Activated CD4-positive, alpha-beta T cell treated with anti-CD3 and anti-CD28 coated beads, Interleukin-2, amount 10 ng/mL, durations not matched to agents 24 days and 14 days (primary cell): ENCODE measurements at regions of chr11 and their contacts with region 1.

Region 1: DNA sequence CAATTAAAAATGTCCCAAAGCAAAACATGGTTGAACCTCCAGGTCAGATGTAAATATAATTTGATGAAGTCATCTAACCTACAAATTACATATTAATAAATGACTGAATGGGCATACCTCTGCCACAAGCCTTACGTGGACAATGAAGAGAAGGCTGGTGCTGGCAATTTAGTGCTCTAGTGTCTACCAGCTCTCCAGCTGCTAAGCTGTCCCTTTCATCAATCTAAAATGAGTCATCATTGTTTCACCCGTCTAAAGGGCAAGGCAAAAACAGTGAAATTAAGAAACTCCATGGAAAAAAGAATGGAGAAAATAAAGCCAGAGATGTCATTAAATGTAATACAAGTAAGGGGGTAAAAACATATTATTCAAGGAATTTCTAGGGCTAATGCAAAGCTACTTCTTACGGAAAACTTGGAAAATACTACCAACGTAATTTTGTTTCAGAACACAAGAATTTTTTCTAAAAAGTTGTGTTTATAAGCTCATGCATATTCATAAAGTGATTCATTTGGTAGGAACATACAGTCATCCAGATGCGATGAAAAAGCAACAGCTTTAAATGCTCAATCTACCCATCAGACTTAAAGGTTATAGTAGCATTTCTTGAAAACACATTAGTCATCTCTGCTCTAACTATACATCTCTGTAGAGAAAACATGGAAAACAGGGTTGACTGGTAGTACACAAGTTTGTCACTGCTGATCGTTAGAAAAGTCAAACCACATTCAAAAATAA is 71.5 kb downstream of the SIK3 start:
- DNase-seq: peak; percentile 53
- H3K4me3 Mint-ChIP-seq: peak overlapping the region; percentile 36
- H3K27ac Mint-ChIP-seq: peak overlapping the region; percentile 92
- H3K4me1 Mint-ChIP-seq: peaks cover 54% of the 10 kb centered on the region
- H3K27me3 Mint-ChIP-seq: no peaks in the 10 kb centered on the region

Region 2: DNA sequence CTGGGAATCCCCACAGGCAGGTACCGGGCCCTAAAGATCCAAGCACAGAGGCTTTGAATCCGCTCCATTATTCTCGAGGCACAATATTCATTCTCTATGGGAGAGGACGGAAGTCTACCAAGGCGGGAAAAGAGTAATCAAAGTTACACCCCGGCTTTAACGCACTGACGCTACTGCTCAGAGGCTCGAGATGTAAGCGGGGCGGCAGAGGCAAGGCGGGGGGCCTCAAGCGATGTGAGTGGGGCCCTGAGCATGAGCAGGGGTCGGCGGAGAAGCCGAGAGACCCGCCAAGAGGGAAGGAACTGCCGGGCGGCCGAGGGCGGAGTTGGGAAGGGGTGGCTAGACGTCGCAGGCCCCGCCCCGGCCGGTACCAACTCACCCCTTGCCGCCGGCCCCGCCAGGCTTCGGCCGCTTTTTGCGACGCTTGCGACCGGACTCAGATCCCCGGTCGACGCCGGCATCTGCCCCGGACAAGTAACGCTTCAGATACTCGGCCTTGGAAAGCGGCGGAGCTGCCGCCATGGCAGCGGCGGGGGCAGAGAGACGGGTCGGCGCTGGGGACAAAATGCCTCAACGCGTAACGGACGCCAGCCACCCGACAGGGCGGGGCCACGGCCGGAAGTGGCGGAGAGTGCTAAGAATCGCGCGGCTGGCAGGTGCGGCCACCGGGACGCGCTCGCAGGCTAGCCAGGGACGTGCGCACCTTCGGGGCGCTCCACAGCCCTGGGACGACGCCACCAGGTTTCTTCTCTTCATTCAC is 254.1 kb before region 1 on chr11 and contains the start of gene BUD13:
- intact Hi-C with region 1: loop called (anchors 10 kb)
- DNase-seq: peak; percentile 99
- H3K4me3 Mint-ChIP-seq: peak within 1 kb of the TSS; percentile 91
- H3K27ac Mint-ChIP-seq: peak within 1 kb of the TSS; percentile 95
- H3K4me1 Mint-ChIP-seq: peaks cover 46% of the 10 kb centered on the region
- H3K27me3 Mint-ChIP-seq: no peaks in the 10 kb centered on the region
- total RNA-seq, gene BUD13: 31.5 and 33.2 TPM in 2 replicates

Region 3: DNA sequence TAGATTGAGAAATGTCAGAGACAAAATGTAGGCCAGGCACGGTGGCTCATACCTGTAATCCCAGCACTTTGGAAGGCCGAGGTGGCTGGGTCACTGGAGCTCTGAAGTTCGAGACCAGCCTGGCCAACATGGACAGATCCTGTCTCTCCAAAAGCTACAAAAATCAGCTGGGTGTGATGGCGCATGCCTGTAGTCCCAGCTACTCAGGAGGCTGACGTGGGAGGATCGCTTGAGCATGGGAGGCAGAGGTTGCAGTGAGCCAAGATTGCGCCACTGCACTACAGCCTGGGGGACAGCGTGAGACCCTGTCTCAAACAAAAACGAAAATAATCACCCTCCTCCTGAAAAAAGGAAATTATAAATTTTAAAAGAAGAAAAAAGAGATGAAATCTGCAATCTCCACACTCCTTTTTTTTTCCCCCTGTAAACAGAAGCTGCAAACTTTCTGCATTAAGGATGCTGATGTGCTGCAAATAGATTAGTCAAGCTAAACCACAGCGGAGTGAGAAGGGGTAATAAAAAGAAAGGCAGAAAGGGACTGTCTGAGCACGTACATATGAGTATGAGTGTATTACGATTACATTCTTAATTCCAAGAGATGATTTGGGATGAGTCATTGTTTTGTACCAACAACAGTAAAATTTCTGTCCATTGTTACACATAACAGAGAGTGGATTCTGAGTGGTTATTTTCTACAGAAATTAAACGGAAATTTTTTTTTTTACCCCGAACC is 15.8 kb before region 1 on chr11:
- intact Hi-C with region 1: loop called (anchors 1 kb)
- DNase-seq: no peak
- H3K4me3 Mint-ChIP-seq: no peak overlapping the region
- H3K27ac Mint-ChIP-seq: peak overlapping the region; percentile 80
- H3K4me1 Mint-ChIP-seq: peaks cover 30% of the 10 kb centered on the region
- H3K27me3 Mint-ChIP-seq: no peaks in the 10 kb centered on the region

Region 4: GRCh38 chr11:117058761-117059261 is 32.0 kb after region 1 on chr11:
- intact Hi-C with region 1: loop called (anchors 1 kb)
- DNase-seq: no peak
- H3K4me3 Mint-ChIP-seq: no peak overlapping the region
- H3K27ac Mint-ChIP-seq: no peak overlapping the region
- H3K4me1 Mint-ChIP-seq: peaks cover 40% of the 10 kb centered on the region
- H3K27me3 Mint-ChIP-seq: no peaks in the 10 kb centered on the region

Region 5: DNA sequence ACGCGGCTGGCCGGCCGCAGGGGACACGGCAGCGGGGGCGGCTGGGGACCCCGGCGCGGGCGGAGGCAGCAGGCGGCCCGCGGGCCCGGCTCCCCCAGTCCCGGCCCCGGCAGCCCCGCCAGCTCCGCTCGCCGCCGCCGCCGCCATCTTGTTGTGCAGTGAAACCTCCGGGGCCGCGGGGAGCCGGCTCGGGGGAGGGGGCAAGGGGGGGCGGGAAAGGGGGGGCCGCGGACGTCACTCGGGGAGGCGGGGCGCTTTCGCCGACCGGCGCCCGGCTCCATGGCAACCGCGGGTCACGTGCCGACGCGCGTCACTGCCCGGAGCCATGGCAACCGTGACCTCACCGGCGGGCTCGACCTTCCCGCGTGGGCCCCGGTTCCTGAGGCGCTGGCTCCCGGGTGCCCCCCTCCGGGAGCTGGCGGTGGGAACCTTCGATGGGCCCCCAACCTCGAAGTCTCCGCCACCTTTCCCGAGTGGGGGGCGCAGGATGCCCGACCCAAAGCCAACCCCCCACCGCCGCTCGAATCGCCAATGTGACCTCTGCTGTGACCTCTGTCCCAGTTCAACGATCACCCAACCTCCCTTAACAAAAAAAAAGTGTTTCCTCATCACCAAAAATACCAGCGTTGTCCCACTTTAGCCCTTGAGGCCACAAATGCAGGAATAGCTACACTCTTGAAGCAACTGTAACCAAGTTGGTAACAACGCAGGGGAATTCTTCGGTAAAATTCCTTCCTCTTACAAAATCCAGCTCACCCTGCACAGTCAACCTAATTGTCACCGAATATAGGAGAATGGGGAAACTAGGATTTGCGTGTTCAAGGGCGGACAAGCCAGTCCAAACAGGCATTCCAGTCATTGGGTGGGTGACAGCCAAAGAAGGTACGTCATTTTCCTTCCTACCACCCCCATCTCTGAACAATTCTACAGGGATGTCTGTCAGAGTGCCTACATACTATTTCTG is 71.8 kb after region 1 on chr11 and contains the start of gene SIK3:
- intact Hi-C with region 1: loop called (anchors 1 kb)
- DNase-seq: peak; percentile 98
- H3K4me3 Mint-ChIP-seq: peak within 1 kb of the TSS; percentile 98
- H3K27ac Mint-ChIP-seq: peak within 1 kb of the TSS; percentile 98
- H3K4me1 Mint-ChIP-seq: peaks cover 42% of the 10 kb centered on the region
- H3K27me3 Mint-ChIP-seq: peaks cover 2% of the 10 kb centered on the region
- total RNA-seq, gene SIK3: 38.4 and 38.7 TPM in 2 replicates